CD14-positive monocyte (primary cell): ENCODE measurements at regions of chr5 and their contacts with region 1.

Region 1: DNA sequence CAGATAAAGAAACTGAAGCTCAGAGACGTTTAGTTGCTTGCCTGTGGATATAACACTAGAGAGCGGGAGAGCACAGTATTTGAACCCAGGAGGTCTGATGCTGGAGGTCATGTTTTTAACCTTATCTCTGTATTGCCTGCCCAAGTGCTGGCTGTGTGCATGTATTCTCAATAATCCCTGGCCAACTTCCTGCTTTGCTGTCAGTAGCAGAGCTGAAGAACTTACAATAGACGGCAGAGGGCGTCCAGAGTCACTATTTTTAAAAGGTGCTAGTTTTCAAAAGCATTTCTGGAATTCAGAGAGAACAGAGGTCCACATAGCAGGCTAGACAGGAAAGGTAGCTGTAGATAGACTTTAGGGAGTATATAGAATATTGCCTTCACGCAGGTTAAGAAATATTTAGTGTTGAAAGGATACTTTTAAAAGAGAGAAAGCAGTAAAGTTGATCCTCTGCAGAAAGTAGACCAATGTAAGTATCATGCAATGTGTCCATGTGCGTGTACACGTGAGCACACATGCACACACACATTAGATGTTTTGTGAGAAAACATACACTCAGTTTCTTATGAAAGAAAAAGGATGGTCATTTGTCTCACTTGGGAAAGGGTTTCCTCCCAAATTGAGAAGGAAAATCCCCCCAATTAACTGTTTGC is 46.3 kb downstream of the PTCD2 start:
- DNase-seq: peak; percentile 57 to 77 (median 71)
- H3K4me3 ChIP-seq: no peak overlapping the region
- H3K4me3 Mint-ChIP-seq: no peak overlapping the region
- H3K27ac ChIP-seq: no peak overlapping the region
- H3K27ac Mint-ChIP-seq: peak overlapping the region in 1 of 7 donors; percentile 2
- H3K4me1 ChIP-seq: peaks cover 54 to 55% of the 10 kb centered on the region in 2 donors
- H3K4me1 Mint-ChIP-seq: peaks cover 56% of the 10 kb centered on the region
- H3K27me3 ChIP-seq: no peaks in the 10 kb centered on the region
- H3K27me3 Mint-ChIP-seq: peaks cover 0 to 2% (median 2%) of the 10 kb centered on the region in 3 donors
- CTCF ChIP-seq: peak; percentile 82

Region 2: DNA sequence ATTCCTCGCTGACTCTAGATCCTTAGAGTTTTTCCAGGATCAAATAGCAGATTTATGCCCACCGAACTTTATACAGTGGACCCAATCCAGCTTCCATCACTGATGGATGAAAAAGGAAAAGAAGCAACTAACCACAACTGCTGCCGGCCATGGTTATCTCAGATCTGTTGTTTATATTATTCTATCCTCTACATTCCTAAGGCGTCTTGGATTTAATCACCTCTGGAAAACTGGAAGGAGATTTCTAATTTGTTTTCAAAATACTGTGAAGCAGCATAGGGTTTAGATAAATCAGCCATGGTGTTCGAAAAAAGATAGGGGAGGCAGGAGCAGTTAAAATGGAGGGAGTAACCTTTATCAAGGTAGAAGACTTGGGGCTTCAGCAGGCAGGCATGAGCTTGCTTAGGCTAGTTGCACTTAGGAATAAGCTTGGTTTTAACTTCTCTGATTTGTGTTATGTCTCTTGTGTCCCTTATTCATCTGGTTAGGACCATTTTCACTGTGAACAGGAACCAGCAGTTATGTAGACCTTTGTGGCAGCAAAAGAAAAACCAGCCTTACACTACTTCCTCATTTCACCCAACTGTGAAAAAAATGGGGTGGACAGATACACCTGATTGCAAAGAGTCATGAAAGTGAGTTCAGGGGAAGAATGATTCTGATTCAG is 141.6 kb after region 1 on chr5:
- intact Hi-C with region 1: loop called in 1 of 2 experiments (anchors 5 kb)
- DNase-seq: peak; percentile 49 to 69 (median 69)
- H3K4me3 ChIP-seq: peak overlapping the region in 1 of 3 experiments; percentile 67
- H3K4me3 Mint-ChIP-seq: peak overlapping the region; percentile 57 to 76
- H3K27ac ChIP-seq: peak overlapping the region; percentile 2 to 72
- H3K27ac Mint-ChIP-seq: peak overlapping the region; percentile 42 to 87 (median 58)
- H3K4me1 ChIP-seq: peaks cover 60 to 66% of the 10 kb centered on the region in 2 donors
- H3K4me1 Mint-ChIP-seq: peaks cover 67% of the 10 kb centered on the region
- H3K27me3 ChIP-seq: no peaks in the 10 kb centered on the region
- H3K27me3 Mint-ChIP-seq: peaks cover 0 to 1% (median 0%) of the 10 kb centered on the region in 3 donors
- CTCF ChIP-seq: no peak

Region 3: DNA sequence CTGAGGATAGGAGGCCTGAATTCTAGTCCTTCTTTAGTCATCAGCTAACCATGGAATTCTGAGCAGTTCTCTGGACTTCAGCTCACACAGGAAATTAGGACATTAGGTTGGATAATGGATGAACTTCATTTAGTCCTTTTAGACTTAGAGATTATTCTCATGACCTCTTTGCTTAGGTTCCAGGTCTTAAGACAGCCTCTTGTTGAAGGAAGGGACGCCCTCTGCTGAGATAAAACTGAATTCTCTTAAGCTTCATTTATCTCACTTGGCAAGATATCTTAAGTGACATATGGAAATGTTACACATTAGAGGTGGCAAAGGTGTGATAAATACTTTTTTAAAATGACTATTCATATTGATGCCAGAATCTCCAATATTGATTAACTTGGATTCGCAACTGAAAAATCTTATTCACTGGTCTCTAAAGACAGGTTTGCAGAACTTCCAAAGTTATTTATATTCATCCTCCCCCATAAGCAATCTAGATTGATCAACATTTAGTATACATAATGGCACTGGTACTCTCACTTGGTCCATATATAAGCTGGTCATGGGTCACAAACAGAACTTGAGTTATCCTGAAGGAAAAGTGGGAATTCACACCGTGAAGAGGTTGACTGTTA is 157.6 kb after region 1 on chr5:
- intact Hi-C with region 1: loop called (anchors 2 to 10 kb)
- DNase-seq: peak; percentile 29 to 59 (median 59)
- H3K4me3 ChIP-seq: no peak overlapping the region
- H3K4me3 Mint-ChIP-seq: no peak overlapping the region
- H3K27ac ChIP-seq: no peak overlapping the region
- H3K27ac Mint-ChIP-seq: no peak overlapping the region
- H3K4me1 ChIP-seq: peaks cover 13 to 14% of the 10 kb centered on the region in 2 donors
- H3K4me1 Mint-ChIP-seq: peaks cover 16% of the 10 kb centered on the region
- H3K27me3 ChIP-seq: no peaks in the 10 kb centered on the region
- H3K27me3 Mint-ChIP-seq: peaks cover 0 to 2% (median 0%) of the 10 kb centered on the region in 3 donors
- CTCF ChIP-seq: peak; percentile 72